ENCODE measurements at regions of chr17 and their contacts with region 1.

Region 1: DNA sequence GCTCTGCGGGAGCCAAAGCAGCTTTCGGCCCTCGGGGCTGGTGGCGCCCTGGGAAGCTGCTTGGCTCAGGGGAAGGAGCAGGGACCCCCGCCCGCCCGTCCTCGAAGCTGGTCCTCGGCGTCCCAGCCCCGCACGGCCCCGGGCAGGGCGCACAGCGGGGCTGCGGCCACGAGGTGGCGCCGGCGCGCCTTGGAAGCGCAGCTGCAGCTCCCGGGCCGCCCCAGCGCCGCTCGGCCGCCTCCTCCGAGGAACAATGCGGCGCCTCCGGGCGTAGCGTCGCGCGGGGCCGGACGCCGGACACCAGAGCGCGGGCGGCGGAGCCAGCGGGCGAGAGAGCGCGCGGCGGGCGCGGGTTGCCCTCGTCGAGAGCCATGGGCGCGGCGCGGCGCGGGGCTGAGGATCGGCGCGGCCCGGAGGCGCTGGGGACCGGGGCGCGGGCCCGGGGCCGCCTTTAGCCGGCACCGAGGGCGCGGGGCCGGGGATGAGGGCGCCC is at the start of gene MGAT5B:
- DNase-seq: peak; percentile 83
- H3K4me3 ChIP-seq: peak within 1 kb of the TSS; percentile 29 to 32
- H3K27ac ChIP-seq: no peak within 1 kb of the TSS
- H3K4me1 ChIP-seq: no peaks in the 10 kb centered on the region
- H3K27me3 ChIP-seq: peaks cover 5% of the 10 kb centered on the region
- CTCF ChIP-seq: peak; percentile 79 to 90 (median 83)
- POLR2A ChIP-seq: no peak
- total RNA-seq, gene MGAT5B: 9.0 to 10.9 TPM

Region 2: GRCh38 chr17:76481071-76481655 is 387.1 kb before region 1 on chr17:
- intact Hi-C with region 1: no loop called
- DNase-seq: peak; percentile 44
- H3K4me3 ChIP-seq: no peak overlapping the region
- H3K27ac ChIP-seq: peak overlapping the region; percentile 64 to 78
- H3K4me1 ChIP-seq: peaks cover 13% of the 10 kb centered on the region
- H3K27me3 ChIP-seq: no peaks in the 10 kb centered on the region
- CTCF ChIP-seq: no peak
- POLR2A ChIP-seq: no peak

Region 3: DNA sequence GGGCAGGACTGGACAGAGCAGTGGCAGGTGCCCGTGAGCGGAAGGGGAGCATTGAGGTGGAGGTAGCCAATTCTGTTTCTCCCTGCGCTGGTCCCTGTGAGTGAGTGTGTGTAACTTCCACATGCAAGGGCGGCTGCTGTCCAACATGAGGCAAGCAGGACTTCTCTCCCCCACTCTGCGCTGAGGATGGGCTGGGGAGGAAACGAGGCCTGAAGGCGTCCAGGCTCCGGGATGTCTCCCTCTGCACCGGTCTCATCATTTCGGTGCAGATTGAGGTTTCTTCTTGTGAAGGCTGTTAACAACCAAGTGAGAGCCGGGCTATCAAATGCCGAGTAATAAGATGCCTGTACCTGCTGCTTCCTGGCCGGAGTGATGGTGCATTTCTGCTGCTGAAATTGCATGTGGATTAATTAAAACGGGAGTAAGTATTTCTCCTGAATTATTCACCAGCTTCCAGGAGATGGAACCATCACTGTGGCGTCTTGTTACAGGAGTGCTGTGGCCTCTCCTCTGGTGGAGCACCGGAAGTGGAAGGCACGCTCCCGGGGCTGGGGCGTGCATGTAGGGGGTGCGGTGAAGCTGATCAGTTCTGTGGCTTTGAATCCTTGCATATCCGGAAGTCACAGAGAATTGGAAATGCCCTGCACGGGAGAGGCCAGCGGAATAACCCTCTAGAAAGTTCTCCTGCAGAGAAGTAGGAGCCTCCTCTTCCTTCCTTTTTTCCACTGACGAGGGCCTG is 41.7 kb before region 1 on chr17:
- intact Hi-C with region 1: no loop called
- DNase-seq: no peak
- H3K4me3 ChIP-seq: no peak overlapping the region
- H3K27ac ChIP-seq: no peak overlapping the region
- H3K4me1 ChIP-seq: no peaks in the 10 kb centered on the region
- H3K27me3 ChIP-seq: no peaks in the 10 kb centered on the region
- CTCF ChIP-seq: no peak
- POLR2A ChIP-seq: no peak

Region 4: GRCh38 chr17:77054936-77055335 is 186.7 kb after region 1 on chr17:
- intact Hi-C with region 1: loop called (anchors 5 kb)
- DNase-seq: no peak
- H3K4me3 ChIP-seq: no peak overlapping the region
- H3K27ac ChIP-seq: no peak overlapping the region
- H3K4me1 ChIP-seq: no peaks in the 10 kb centered on the region
- H3K27me3 ChIP-seq: no peaks in the 10 kb centered on the region
- CTCF ChIP-seq: no peak
- POLR2A ChIP-seq: no peak

Region 5: GRCh38 chr17:77247048-77247541 is 378.9 kb after region 1 on chr17:
- intact Hi-C with region 1: loop called (anchors 10 kb)
- DNase-seq: peak; percentile 87
- H3K4me3 ChIP-seq: peak overlapping the region; percentile 19 to 58
- H3K27ac ChIP-seq: no peak overlapping the region
- H3K4me1 ChIP-seq: peaks cover 5% of the 10 kb centered on the region
- H3K27me3 ChIP-seq: no peaks in the 10 kb centered on the region
- CTCF ChIP-seq: peak; percentile 97 to 98 (median 97)
- POLR2A ChIP-seq: no peak

Region 6: GRCh38 chr17:77257596-77258458 is 389.6 kb after region 1 on chr17:
- intact Hi-C with region 1: no loop called
- DNase-seq: no peak
- H3K4me3 ChIP-seq: no peak overlapping the region
- H3K27ac ChIP-seq: no peak overlapping the region
- H3K4me1 ChIP-seq: peaks cover 3% of the 10 kb centered on the region
- H3K27me3 ChIP-seq: no peaks in the 10 kb centered on the region
- CTCF ChIP-seq: no peak
- POLR2A ChIP-seq: no peak

Measured in testis (tissue), 5 donors.